ENCODE measurements at regions of chrX and their contacts with region 1.

Region 1: GRCh38 chrX:14872851-14873675 is at the starts of genes FANCB and MOSPD2:
- DNase-seq: peak; percentile 83 to 96 (median 93)
- ATAC-seq: peak; percentile 95
- H3K4me3 ChIP-seq: peak within 1 kb of the TSS; percentile 76
- H3K4me3 Mint-ChIP-seq: peak within 1 kb of the TSS; percentile 82 to 94 (median 88)
- H3K27ac ChIP-seq: peak within 1 kb of the TSS; percentile 76
- H3K27ac Mint-ChIP-seq: peak within 1 kb of the TSS; percentile 75 to 93 (median 88)
- H3K4me1 ChIP-seq: peaks cover 4 to 9% of the 10 kb centered on the region in 2 donors
- H3K4me1 Mint-ChIP-seq: peaks cover 0 to 34% (median 14%) of the 10 kb centered on the region in 7 donors
- H3K27me3 ChIP-seq: no peaks in the 10 kb centered on the region
- H3K27me3 Mint-ChIP-seq: no peaks in the 10 kb centered on the region
- total RNA-seq, gene FANCB: 3.3 to 8.3 (median 4.0) TPM
- total RNA-seq, gene MOSPD2: 7.1 to 15.7 (median 13.4) TPM

Region 2: GRCh38 chrX:13734278-13735172 is 1138.5 kb before region 1 on chrX and contains the starts of genes OFD1 and TRAPPC2:
- CTCF ChIA-PET with region 1: no interaction called
- POLR2A ChIA-PET with region 1: no interaction called
- intact Hi-C with region 1: loop called (anchors 1 to 10 kb)
- DNase-seq: peak; percentile 76 to 92 (median 87)
- ATAC-seq: peak; percentile 94
- H3K4me3 ChIP-seq: peak within 1 kb of the TSS; percentile 85
- H3K4me3 Mint-ChIP-seq: peak within 1 kb of the TSS; percentile 82 to 99 (median 94)
- H3K27ac ChIP-seq: peak within 1 kb of the TSS; percentile 99
- H3K27ac Mint-ChIP-seq: peak within 1 kb of the TSS; percentile 95 to 99 (median 97)
- H3K4me1 ChIP-seq: peaks cover 12 to 20% of the 10 kb centered on the region in 2 donors
- H3K4me1 Mint-ChIP-seq: peaks cover 21 to 66% (median 58%) of the 10 kb centered on the region in 7 donors
- H3K27me3 ChIP-seq: no peaks in the 10 kb centered on the region
- H3K27me3 Mint-ChIP-seq: no peaks in the 10 kb centered on the region
- total RNA-seq, gene OFD1: 30.4 to 142 (median 72.5) TPM
- total RNA-seq, gene TRAPPC2: 20.7 to 31.1 (median 23.5) TPM

Region 3: GRCh38 chrX:14497184-14497666 is 375.8 kb before region 1 on chrX:
- CTCF ChIA-PET with region 1: no interaction called
- POLR2A ChIA-PET with region 1: no interaction called
- intact Hi-C with region 1: loop called (anchors 5 to 10 kb)
- DNase-seq: peak in 5 of 9 donors; percentile 3 to 29 (median 24)
- ATAC-seq: peak; percentile 37
- H3K4me3 ChIP-seq: peak overlapping the region; percentile 55
- H3K4me3 Mint-ChIP-seq: peak overlapping the region; percentile 34 to 89 (median 84)
- H3K27ac ChIP-seq: peak overlapping the region; percentile 49
- H3K27ac Mint-ChIP-seq: peak overlapping the region; percentile 82 to 96 (median 89)
- H3K4me1 ChIP-seq: no peaks in the 10 kb centered on the region
- H3K4me1 Mint-ChIP-seq: peaks cover 5 to 24% (median 21%) of the 10 kb centered on the region in 7 donors
- H3K27me3 ChIP-seq: no peaks in the 10 kb centered on the region
- H3K27me3 Mint-ChIP-seq: peaks cover 0 to 2% (median 0%) of the 10 kb centered on the region in 5 donors

Region 4: GRCh38 chrX:15151267-15152186 is 278.5 kb after region 1 on chrX:
- CTCF ChIA-PET with region 1: no interaction called
- POLR2A ChIA-PET with region 1: no interaction called
- intact Hi-C with region 1: loop called (anchors 1 to 10 kb)
- DNase-seq: peak in 4 of 9 donors; percentile 14 to 22 (median 15)
- ATAC-seq: peak; percentile 45
- H3K4me3 ChIP-seq: no peak overlapping the region
- H3K4me3 Mint-ChIP-seq: peak overlapping the region in 9 of 10 donors; percentile 11 to 66 (median 49)
- H3K27ac ChIP-seq: no peak overlapping the region
- H3K27ac Mint-ChIP-seq: peak overlapping the region in 7 of 9 donors; percentile 9 to 93 (median 62)
- H3K4me1 ChIP-seq: peaks cover 5 to 11% of the 10 kb centered on the region in 2 donors
- H3K4me1 Mint-ChIP-seq: peaks cover 7 to 52% (median 25%) of the 10 kb centered on the region in 7 donors
- H3K27me3 ChIP-seq: no peaks in the 10 kb centered on the region
- H3K27me3 Mint-ChIP-seq: peaks cover 0 to 3% (median 0%) of the 10 kb centered on the region in 5 donors

Region 5: DNA sequence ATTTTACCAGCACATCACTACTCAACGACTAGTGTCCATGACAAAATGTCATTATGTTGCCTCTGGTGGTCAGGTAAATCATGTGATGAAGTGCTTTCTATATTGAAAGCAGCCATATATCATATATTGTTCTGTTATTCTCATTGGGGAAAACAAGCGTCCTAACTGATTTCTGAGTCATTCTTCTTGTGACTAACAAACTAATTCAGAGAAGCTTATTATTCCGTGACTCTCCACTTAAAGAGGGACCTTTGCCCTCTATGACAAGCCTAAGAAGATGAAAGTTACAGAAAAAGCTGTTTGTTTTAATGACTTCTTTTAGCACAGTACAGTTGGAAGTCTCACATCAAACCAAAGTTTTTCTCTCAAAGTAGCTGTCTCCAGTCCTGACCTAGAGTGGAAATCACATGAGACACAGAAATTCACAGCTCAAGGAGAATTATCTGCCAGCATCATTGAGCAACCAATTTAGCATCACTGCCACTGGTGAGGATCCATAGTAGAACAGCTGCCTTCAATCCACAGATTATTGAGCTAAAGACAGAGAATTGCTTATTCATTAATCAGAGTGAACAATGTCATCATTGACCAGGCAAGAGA is 360.5 kb after region 1 on chrX:
- CTCF ChIA-PET with region 1: no interaction called
- POLR2A ChIA-PET with region 1: no interaction called
- intact Hi-C with region 1: no loop called
- DNase-seq: no peak
- ATAC-seq: no peak
- H3K4me3 ChIP-seq: no peak overlapping the region
- H3K4me3 Mint-ChIP-seq: no peak overlapping the region
- H3K27ac ChIP-seq: no peak overlapping the region
- H3K27ac Mint-ChIP-seq: no peak overlapping the region
- H3K4me1 ChIP-seq: no peaks in the 10 kb centered on the region
- H3K4me1 Mint-ChIP-seq: peaks cover 0 to 2% (median 0%) of the 10 kb centered on the region in 7 donors
- H3K27me3 ChIP-seq: no peaks in the 10 kb centered on the region
- H3K27me3 Mint-ChIP-seq: peaks cover 0 to 6% (median 0%) of the 10 kb centered on the region in 5 donors

Region 6: DNA sequence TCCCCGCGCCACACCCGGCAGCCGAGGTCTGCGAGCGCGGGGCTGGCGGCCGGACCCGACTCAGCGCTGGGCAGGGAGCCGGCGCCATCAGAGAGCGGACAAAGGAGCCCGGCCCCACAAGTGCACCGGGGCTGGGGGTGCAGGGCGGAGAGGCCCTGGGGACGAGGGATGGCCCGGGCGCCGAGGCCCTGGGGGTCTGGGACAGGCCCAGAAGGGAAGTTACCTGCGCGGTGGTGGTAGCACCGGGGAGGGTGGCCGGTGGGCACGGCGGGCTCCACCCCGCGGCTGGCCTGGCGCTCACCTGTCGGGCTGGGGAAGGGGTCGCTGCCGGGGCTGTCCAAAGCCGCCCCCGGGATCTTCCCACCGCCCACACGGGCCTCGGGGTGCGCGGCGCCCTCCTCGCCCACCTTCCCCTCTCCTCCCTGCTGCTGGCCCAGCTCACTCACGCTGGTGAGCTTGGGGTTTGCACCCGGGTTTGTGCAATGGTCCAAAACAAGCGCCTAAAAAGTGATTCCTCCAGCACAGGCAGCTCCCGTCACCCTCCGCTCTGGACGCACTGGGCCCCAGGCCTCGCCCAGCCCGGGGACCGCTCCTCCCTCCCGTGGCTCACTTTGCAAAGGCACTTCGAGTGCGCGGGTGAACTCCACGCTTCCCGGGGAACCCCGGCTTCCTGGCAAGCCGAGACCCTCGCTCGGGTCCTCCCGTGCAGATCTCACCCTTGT is 1839.2 kb after region 1 on chrX and contains the start of gene CTPS2:
- CTCF ChIA-PET with region 1: no interaction called
- POLR2A ChIA-PET with region 1: no interaction called
- intact Hi-C with region 1: loop called in 1 of 2 experiments (anchors 5 kb)
- DNase-seq: peak; percentile 29 to 49 (median 41)
- ATAC-seq: peak; percentile 92
- H3K4me3 ChIP-seq: peak within 1 kb of the TSS; percentile 60
- H3K4me3 Mint-ChIP-seq: peak within 1 kb of the TSS; percentile 87 to 93 (median 90)
- H3K27ac ChIP-seq: peak within 1 kb of the TSS; percentile 70
- H3K27ac Mint-ChIP-seq: peak within 1 kb of the TSS; percentile 82 to 94 (median 89)
- H3K4me1 ChIP-seq: no peaks in the 10 kb centered on the region
- H3K4me1 Mint-ChIP-seq: peaks cover 0 to 19% (median 15%) of the 10 kb centered on the region in 7 donors
- H3K27me3 ChIP-seq: no peaks in the 10 kb centered on the region
- H3K27me3 Mint-ChIP-seq: no peaks in the 10 kb centered on the region
- total RNA-seq, gene CTPS2: 5.2 to 8.9 (median 6.3) TPM

Region 7: DNA sequence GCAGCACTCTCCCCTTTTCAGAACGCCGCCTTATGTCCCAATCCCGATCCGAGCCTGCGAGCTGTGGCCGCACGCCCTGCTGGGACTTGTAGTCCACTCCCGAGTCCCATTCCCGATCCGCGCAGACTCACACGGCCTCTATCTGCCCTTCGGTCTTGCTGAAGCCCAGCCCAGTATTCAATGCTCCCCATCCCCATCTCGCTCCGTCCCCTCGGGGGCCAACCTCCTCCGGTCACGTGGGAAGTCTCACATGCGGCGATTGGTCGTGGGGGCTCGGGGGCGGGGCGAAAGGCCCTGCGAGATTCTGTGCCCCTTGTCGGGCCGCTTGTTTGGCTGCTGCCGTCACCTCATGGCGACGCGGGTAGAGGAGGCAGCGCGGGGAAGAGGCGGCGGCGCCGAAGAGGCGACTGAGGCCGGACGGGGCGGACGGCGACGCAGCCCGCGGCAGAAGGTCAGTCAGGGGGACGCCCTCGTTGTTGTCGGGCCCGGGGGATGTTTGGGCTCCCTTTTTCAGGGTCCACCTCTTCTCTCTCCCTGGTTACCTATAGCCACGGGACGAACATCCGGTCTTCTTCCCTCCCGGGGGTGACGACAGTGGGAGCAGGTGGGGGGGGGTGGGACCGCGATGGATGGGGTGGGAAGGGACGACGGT is 1913.2 kb after region 1 on chrX and contains the start of gene TXLNG:
- CTCF ChIA-PET with region 1: no interaction called
- POLR2A ChIA-PET with region 1: no interaction called
- intact Hi-C with region 1: loop called in 1 of 2 experiments (anchors 1 kb)
- DNase-seq: peak; percentile 81 to 98 (median 97)
- ATAC-seq: peak; percentile 97
- H3K4me3 ChIP-seq: peak within 1 kb of the TSS; percentile 94
- H3K4me3 Mint-ChIP-seq: peak within 1 kb of the TSS; percentile 95 to 99 (median 97)
- H3K27ac ChIP-seq: peak within 1 kb of the TSS; percentile 88
- H3K27ac Mint-ChIP-seq: peak within 1 kb of the TSS; percentile 78 to 94 (median 90)
- H3K4me1 ChIP-seq: peaks cover 0 to 3% of the 10 kb centered on the region in 2 donors
- H3K4me1 Mint-ChIP-seq: peaks cover 4 to 42% (median 12%) of the 10 kb centered on the region in 7 donors
- H3K27me3 ChIP-seq: no peaks in the 10 kb centered on the region
- H3K27me3 Mint-ChIP-seq: no peaks in the 10 kb centered on the region
- total RNA-seq, gene TXLNG: 11.9 to 23.1 (median 17.3) TPM

Measured in naive thymus-derived CD4-positive, alpha-beta T cell (primary cell).